Activated CD4-positive, alpha-beta T cell treated with anti-CD3 and anti-CD28 coated beads, Interleukin-2, amount 10 ng/mL, durations not matched to agents 7 days and 5 days (primary cell): ENCODE measurements at regions of chr1 and their contacts with region 1.

Region 1: GRCh38 chr1:2545759-2546514 is 10.2 kb upstream of the TNFRSF14 start:
- DNase-seq: peak; percentile 91
- H3K4me3 Mint-ChIP-seq: peak overlapping the region; percentile 87
- H3K27ac Mint-ChIP-seq: peak overlapping the region; percentile 97
- H3K4me1 Mint-ChIP-seq: peaks cover 33% of the 10 kb centered on the region
- H3K27me3 Mint-ChIP-seq: peaks cover 3% of the 10 kb centered on the region

Region 2: GRCh38 chr1:2194898-2195673 is 350.9 kb before region 1 on chr1:
- CTCF ChIA-PET with region 1: interaction called, 12 read pairs
- POLR2A ChIA-PET with region 1: no interaction called
- DNase-seq: peak; percentile 91
- H3K4me3 Mint-ChIP-seq: peak overlapping the region; percentile 79
- H3K27ac Mint-ChIP-seq: peak overlapping the region; percentile 94
- H3K4me1 Mint-ChIP-seq: peaks cover 32% of the 10 kb centered on the region
- H3K27me3 Mint-ChIP-seq: no peaks in the 10 kb centered on the region

Region 3: GRCh38 chr1:2415801-2416208 is 130.1 kb before region 1 on chr1:
- CTCF ChIA-PET with region 1: interaction called, 12 read pairs
- POLR2A ChIA-PET with region 1: interaction called, 3 read pairs
- DNase-seq: peak; percentile 63
- H3K4me3 Mint-ChIP-seq: peak overlapping the region; percentile 77
- H3K27ac Mint-ChIP-seq: peak overlapping the region; percentile 85
- H3K4me1 Mint-ChIP-seq: peaks cover 43% of the 10 kb centered on the region
- H3K27me3 Mint-ChIP-seq: no peaks in the 10 kb centered on the region

Region 4: DNA sequence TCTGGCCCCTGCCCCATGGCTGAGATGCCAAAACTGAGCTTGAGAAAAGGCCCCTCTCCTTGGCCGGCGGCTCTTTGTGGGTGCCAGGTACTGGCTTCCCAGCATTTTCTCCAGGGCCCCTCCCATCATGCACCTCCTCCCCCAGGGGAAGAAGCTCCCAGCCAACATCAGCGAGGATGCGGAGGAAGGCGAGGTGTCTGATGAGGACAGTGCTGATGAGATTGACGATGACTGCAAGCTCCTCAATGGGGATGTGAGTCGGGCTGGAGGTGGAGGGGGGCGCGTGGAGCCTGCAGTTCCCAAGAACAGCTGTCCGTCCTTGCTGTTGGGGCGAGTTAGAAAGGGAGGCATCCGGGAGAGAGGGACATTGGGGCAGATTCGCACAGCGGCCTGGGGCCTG is 56.3 kb before region 1 on chr1:
- CTCF ChIA-PET with region 1: no interaction called
- POLR2A ChIA-PET with region 1: no interaction called
- DNase-seq: no peak
- H3K4me3 Mint-ChIP-seq: no peak overlapping the region
- H3K27ac Mint-ChIP-seq: no peak overlapping the region
- H3K4me1 Mint-ChIP-seq: peaks cover 7% of the 10 kb centered on the region
- H3K27me3 Mint-ChIP-seq: no peaks in the 10 kb centered on the region

Region 5: DNA sequence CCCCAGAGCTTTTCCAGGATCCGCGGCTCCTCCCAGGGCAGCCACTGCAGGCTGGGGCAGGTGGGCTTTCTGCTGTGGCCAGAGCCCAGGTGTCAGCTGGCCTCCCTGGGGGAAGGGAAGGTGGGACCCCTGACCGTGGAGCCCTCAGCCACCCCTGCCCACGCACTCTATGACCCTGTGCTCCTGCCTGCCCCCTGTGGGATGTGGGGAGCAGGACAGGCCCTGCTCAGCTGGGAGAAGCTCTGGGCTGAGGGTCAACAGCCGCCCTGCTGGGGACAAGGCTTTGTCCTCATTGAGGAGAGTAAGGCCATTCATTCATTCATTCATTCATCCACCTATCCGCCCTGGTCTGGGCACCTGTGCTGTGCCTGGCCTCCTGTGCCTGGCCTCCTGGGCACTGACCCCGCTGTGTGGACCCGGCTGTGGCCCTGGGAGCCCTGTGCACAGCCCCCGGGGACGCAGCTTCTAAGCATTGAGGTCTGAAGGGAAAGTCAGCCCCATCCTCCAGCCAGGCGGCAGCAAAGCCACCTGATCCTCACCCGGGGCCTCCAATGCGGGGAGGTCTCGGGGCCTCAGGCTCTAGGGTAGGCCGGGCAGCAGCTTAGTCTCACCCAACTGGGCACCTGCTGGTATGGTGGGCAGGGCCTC is 16.1 kb after region 1 on chr1:
- CTCF ChIA-PET with region 1: interaction called, 10 read pairs
- POLR2A ChIA-PET with region 1: no interaction called
- DNase-seq: no peak
- H3K4me3 Mint-ChIP-seq: no peak overlapping the region
- H3K27ac Mint-ChIP-seq: no peak overlapping the region
- H3K4me1 Mint-ChIP-seq: peaks cover 18% of the 10 kb centered on the region
- H3K27me3 Mint-ChIP-seq: no peaks in the 10 kb centered on the region

Region 6: DNA sequence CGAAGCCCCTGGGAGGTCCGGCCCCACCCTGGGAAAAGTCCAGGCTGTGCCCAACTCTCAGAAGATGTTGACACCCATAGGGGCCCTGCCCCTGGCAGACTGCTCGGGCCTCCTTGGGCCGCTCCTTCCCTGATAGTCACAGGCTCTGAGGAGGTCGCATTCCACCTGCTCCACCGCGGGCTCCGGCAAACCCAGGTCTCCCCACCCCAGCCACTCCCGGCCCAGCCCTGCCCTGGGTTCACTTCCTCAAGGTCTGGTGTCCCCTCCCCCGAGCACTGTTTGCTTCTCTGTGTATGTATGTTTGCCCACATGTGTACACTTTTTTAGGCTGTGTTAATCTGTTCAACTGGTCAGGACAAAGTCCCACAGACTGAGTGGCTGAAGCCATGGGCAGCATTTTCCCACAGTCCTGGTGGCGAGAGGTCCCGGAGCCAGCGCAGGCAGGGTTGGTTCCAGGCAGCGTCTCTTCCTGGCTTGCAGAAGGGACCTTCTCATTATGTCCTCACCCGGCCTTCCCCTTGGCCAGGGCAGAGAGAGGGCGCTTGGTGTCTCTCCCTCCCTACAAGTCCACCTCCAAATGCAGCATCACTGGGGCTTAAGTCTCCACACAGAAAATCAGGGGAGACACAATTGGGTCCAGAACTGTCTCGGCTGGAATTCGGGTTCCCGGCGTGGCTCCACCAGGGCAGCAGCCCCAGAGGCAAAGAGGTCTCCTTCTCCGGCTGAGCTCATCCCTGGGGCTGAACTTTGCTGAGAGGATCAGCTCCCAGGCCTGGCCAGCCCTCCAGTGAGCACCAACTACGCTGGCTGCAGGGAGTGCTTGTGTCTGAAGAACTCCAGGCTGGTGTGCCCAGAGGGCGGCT is 30.1 kb after region 1 on chr1:
- CTCF ChIA-PET with region 1: interaction called, 10 read pairs
- POLR2A ChIA-PET with region 1: no interaction called
- DNase-seq: no peak
- H3K4me3 Mint-ChIP-seq: no peak overlapping the region
- H3K27ac Mint-ChIP-seq: peak overlapping the region; percentile 72
- H3K4me1 Mint-ChIP-seq: peaks cover 50% of the 10 kb centered on the region
- H3K27me3 Mint-ChIP-seq: no peaks in the 10 kb centered on the region

Region 7: GRCh38 chr1:2586154-2587070 is 40.5 kb after region 1 on chr1 and contains the start of gene PRXL2B:
- CTCF ChIA-PET with region 1: interaction called, 36 read pairs
- POLR2A ChIA-PET with region 1: interaction called, 5 read pairs
- DNase-seq: peak; percentile 98
- H3K4me3 Mint-ChIP-seq: peak within 1 kb of the TSS; percentile 91
- H3K27ac Mint-ChIP-seq: peak within 1 kb of the TSS; percentile 97
- H3K4me1 Mint-ChIP-seq: peaks cover 28% of the 10 kb centered on the region
- H3K27me3 Mint-ChIP-seq: no peaks in the 10 kb centered on the region
- total RNA-seq, gene PRXL2B: 25.2 to 33.3 TPM